ENCODE measurements at regions of chr7 and their contacts with region 1.

Region 1: GRCh38 chr7:100428199-100428966 is at the start of gene ZCWPW1:
- DNase-seq: peak; percentile 94 to 99 (median 97)
- ATAC-seq: peak; percentile 61
- H3K4me3 ChIP-seq: peak within 1 kb of the TSS; percentile 96
- H3K4me3 Mint-ChIP-seq: peak within 1 kb of the TSS; percentile 100
- H3K27ac ChIP-seq: peak within 1 kb of the TSS; percentile 100
- H3K27ac Mint-ChIP-seq: peak within 1 kb of the TSS; percentile 100
- H3K4me1 ChIP-seq: peaks cover 49% of the 10 kb centered on the region
- H3K4me1 Mint-ChIP-seq: peaks cover 40% of the 10 kb centered on the region
- H3K27me3 ChIP-seq: no peaks in the 10 kb centered on the region
- H3K27me3 Mint-ChIP-seq: peaks cover 11% of the 10 kb centered on the region
- CTCF ChIP-seq: no peak
- total RNA-seq, gene ZCWPW1: 4.4 to 6.5 TPM

Region 2: DNA sequence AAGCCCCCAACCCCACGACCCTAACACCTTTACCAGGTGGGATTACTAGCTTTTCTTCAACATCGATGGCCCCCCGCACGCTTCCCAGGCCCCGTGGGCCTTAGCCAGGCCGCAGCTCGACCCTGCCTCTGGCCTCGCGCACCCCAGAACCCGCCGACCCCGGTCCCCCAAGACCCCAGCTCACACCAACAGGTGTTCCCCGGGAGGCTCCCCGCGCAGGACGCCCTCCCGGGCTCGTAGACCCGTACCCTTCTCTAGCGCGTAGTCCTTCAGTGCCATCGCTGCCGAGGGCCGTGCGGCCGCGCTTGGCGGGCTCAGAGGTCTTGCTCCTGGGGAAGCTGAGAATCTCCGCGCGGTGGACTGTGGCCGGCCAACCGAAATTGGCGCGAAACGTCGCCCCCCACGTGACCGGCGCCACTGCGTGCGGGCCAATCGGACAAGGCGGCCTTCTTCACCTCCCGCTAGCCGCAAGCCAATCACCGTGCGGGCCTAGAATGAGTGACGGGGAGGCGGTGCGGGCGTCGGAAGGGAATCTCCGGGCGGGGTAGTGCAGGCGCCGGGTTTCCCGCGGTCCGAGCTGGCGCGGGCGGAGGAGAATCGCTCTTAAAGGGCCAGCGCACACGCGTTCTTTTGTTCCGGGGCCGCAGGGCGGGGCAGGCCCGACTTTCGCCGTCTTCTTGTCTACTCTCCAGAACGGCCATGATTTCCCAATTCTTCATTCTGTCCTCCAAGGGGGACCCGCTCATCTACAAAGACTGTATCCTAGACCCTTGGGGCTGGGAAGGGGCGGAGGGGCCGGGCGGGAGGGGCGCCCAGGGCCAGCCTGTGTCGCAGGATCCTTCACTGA is 327.1 kb before region 1 on chr7 and contains the starts of genes AP4M1 and MCM7:
- CTCF ChIA-PET with region 1: no interaction called
- POLR2A ChIA-PET with region 1: interaction called, 24 read pairs
- intact Hi-C with region 1: no loop called
- DNase-seq: peak; percentile 87 to 98 (median 93)
- ATAC-seq: peak; percentile 85
- H3K4me3 ChIP-seq: peak within 1 kb of the TSS; percentile 97
- H3K4me3 Mint-ChIP-seq: peak within 1 kb of the TSS; percentile 98
- H3K27ac ChIP-seq: peak within 1 kb of the TSS; percentile 90 to 95
- H3K27ac Mint-ChIP-seq: peak within 1 kb of the TSS; percentile 98
- H3K4me1 ChIP-seq: peaks cover 38% of the 10 kb centered on the region
- H3K4me1 Mint-ChIP-seq: peaks cover 47% of the 10 kb centered on the region
- H3K27me3 ChIP-seq: no peaks in the 10 kb centered on the region
- H3K27me3 Mint-ChIP-seq: no peaks in the 10 kb centered on the region
- CTCF ChIP-seq: no peak
- total RNA-seq, gene AP4M1: 2.8 to 4.0 TPM
- total RNA-seq, gene MCM7: 54.5 to 56.0 TPM

Region 3: DNA sequence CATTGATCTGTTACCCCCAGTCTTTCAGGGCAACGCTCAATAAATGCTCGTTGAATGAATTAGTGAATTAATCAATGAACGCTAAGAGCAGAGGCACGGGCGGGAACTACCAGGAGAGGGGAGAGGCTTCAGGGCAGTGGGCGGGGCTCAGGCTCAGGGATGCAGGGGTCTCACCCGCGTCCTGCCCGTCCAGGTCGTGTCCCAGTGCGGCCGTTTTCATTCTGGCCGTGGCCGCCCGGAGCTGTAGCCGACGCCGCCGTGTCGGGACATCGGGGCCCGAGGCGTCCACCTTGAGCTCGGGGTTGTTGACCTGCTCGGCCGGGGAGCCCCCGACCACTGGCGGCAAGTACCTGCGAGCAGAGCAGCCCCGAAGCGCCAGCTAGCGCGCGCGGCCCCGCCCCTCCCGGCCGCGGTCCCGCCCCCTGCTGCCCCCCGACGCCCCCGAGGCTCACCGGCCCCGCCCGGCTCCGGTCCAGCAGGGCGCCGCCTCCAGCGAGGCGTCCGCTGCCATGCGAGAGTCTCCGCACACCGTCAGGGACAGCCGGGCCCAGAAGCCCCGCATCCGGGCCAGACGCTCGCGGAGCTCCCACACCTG is 257.2 kb before region 1 on chr7:
- CTCF ChIA-PET with region 1: no interaction called
- POLR2A ChIA-PET with region 1: interaction called, 15 read pairs
- intact Hi-C with region 1: no loop called
- DNase-seq: peak in 6 of 14 experiments; percentile 25 to 69 (median 56)
- ATAC-seq: peak; percentile 22
- H3K4me3 ChIP-seq: peak overlapping the region; percentile 52
- H3K4me3 Mint-ChIP-seq: peak overlapping the region; percentile 85
- H3K27ac ChIP-seq: peak overlapping the region in 1 of 2 donors; percentile 50
- H3K27ac Mint-ChIP-seq: peak overlapping the region; percentile 91
- H3K4me1 ChIP-seq: peaks cover 65% of the 10 kb centered on the region
- H3K4me1 Mint-ChIP-seq: peaks cover 62% of the 10 kb centered on the region
- H3K27me3 ChIP-seq: peaks cover 0 to 3% of the 10 kb centered on the region in 2 experiments
- H3K27me3 Mint-ChIP-seq: no peaks in the 10 kb centered on the region
- CTCF ChIP-seq: no peak

Region 4: GRCh38 chr7:100444311-100445278 is 16.2 kb after region 1 on chr7:
- CTCF ChIA-PET with region 1: no interaction called
- POLR2A ChIA-PET with region 1: interaction called, 84 read pairs
- intact Hi-C with region 1: no loop called
- DNase-seq: peak in 2 of 14 experiments; percentile 49 to 61
- ATAC-seq: no peak
- H3K4me3 ChIP-seq: no peak overlapping the region
- H3K4me3 Mint-ChIP-seq: no peak overlapping the region
- H3K27ac ChIP-seq: no peak overlapping the region
- H3K27ac Mint-ChIP-seq: no peak overlapping the region
- H3K4me1 ChIP-seq: peaks cover 16% of the 10 kb centered on the region
- H3K4me1 Mint-ChIP-seq: peaks cover 6% of the 10 kb centered on the region
- H3K27me3 ChIP-seq: no peaks in the 10 kb centered on the region
- H3K27me3 Mint-ChIP-seq: no peaks in the 10 kb centered on the region
- CTCF ChIP-seq: no peak

Region 5: DNA sequence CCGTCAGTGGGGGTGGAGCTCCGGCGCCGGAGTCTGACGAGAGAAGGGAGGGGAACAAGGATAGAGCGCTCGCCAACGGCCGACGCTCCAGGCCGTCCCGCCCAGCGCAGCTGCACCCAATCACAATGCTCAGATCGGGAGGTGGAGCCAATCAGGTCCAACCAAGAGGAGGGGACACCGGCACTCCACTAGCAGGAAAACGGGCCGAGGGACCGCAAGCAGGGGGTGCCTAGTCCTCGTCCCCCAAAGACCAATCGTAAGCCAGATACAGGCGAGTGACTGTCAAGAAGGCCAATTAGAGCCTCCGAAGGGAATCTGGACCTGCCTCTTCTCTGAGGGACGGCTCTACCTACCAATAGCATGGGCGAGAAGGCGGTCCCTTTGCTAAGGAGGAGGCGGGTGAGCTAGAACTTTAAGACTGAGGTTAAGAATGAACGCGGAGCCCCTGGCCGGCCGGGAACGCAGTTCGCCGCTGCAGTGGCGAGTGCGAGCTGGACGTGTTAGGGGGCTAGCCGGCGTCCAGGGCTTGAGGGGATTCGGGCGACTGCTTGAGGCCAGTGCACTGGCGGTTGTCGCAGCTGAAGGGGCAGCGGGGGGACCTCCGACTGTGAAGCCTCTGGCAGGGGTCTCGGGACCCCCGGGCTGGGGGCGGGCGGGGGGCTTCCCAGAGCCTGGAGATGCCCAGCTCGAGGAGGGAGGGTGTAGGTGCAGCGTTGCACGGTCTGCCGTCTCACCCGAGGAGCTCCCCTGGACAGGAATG is 158.1 kb after region 1 on chr7 and contains the start of gene FBXO24:
- CTCF ChIA-PET with region 1: interaction called, 3 read pairs
- POLR2A ChIA-PET with region 1: interaction called, 91 read pairs
- intact Hi-C with region 1: no loop called
- DNase-seq: peak; percentile 98 to 100 (median 99)
- ATAC-seq: peak; percentile 82
- H3K4me3 ChIP-seq: peak within 1 kb of the TSS; percentile 95
- H3K4me3 Mint-ChIP-seq: peak within 1 kb of the TSS; percentile 97
- H3K27ac ChIP-seq: peak within 1 kb of the TSS; percentile 93 to 96
- H3K27ac Mint-ChIP-seq: no peak within 1 kb of the TSS
- H3K4me1 ChIP-seq: peaks cover 50% of the 10 kb centered on the region
- H3K4me1 Mint-ChIP-seq: peaks cover 35% of the 10 kb centered on the region
- H3K27me3 ChIP-seq: peaks cover 0 to 5% of the 10 kb centered on the region in 2 experiments
- H3K27me3 Mint-ChIP-seq: no peaks in the 10 kb centered on the region
- CTCF ChIP-seq: no peak
- total RNA-seq, gene FBXO24: 0.66 to 0.78 TPM

Region 6: GRCh38 chr7:100620239-100620638 is 191.9 kb after region 1 on chr7:
- CTCF ChIA-PET with region 1: no interaction called
- POLR2A ChIA-PET with region 1: no interaction called
- intact Hi-C with region 1: no loop called
- DNase-seq: no peak
- ATAC-seq: no peak
- H3K4me3 ChIP-seq: no peak overlapping the region
- H3K4me3 Mint-ChIP-seq: no peak overlapping the region
- H3K27ac ChIP-seq: no peak overlapping the region
- H3K27ac Mint-ChIP-seq: no peak overlapping the region
- H3K4me1 ChIP-seq: peaks cover 5% of the 10 kb centered on the region
- H3K4me1 Mint-ChIP-seq: peaks cover 5% of the 10 kb centered on the region
- H3K27me3 ChIP-seq: no peaks in the 10 kb centered on the region
- H3K27me3 Mint-ChIP-seq: no peaks in the 10 kb centered on the region
- CTCF ChIP-seq: no peak

Region 7: GRCh38 chr7:101251871-101252659 is 823.7 kb after region 1 on chr7:
- CTCF ChIA-PET with region 1: no interaction called
- POLR2A ChIA-PET with region 1: no interaction called
- intact Hi-C with region 1: loop called in 1 of 2 experiments (anchors 10 kb)
- DNase-seq: peak; percentile 96 to 100 (median 98)
- ATAC-seq: peak; percentile 97
- H3K4me3 ChIP-seq: peak overlapping the region; percentile 95
- H3K4me3 Mint-ChIP-seq: peak overlapping the region; percentile 98
- H3K27ac ChIP-seq: peak overlapping the region; percentile 75 to 76
- H3K27ac Mint-ChIP-seq: peak overlapping the region; percentile 88
- H3K4me1 ChIP-seq: peaks cover 23% of the 10 kb centered on the region
- H3K4me1 Mint-ChIP-seq: peaks cover 38% of the 10 kb centered on the region
- H3K27me3 ChIP-seq: no peaks in the 10 kb centered on the region
- H3K27me3 Mint-ChIP-seq: peaks cover 5% of the 10 kb centered on the region
- CTCF ChIP-seq: no peak